Endothelial cell of umbilical vein (primary cell): ENCODE measurements at regions of chr12 and their contacts with region 1.

Region 1: DNA sequence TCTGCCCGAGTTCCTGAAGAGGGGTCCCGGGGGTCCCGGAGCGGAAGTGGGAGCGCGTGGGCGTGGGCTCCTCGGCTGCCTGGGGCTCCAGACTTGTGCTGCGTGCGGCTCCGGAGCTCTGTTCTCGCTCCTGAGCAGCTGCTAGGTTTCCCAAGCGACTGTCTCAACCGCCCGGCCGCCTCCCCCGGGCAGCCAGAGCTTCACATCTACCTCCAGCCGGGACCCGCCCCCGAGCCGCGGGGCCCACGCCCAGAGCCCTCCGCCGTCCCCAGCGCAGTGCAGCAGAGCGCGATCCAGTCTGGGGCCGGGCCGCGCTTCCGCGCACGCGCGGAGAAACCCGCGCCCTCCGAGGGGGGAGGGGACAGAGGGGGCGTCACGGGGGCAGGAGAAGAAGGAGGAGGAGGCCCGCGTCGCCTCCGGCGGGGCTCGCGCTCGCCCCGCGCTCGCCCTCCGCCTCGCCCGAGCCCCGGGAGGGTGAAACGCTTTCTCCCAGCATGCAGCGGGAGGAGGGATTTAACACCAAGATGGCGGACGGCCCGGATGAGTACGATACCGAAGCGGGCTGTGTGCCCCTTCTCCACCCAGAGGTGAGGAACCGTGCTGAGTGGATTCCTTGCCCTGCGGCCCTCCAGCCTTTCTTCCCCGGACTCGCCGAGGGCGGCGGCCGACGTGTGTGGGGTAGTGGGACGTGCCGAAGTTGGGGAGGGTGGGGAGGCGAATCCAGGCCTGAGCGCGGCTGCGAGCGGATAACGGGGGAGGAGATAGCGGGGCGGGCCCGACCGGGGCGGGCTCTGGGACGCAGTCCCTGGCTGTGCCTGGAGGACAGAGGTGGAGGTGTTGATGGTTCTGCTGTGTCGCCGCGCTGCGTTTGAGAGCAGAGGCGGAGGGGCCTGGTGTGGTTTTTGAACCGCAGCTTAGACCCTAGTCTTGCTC is at the start of gene ZDHHC17:
- DNase-seq: peak; percentile 95
- H3K4me3 ChIP-seq: peak within 1 kb of the TSS; percentile 75 to 88 (median 75)
- H3K27ac ChIP-seq: peak within 1 kb of the TSS; percentile 91
- H3K4me1 ChIP-seq: peaks cover 17% of the 10 kb centered on the region
- H3K27me3 ChIP-seq: no peaks in the 10 kb centered on the region
- CTCF ChIP-seq: no peak
- POLR2A ChIP-seq: peak; percentile 82
- total RNA-seq, gene ZDHHC17: 23.6 and 26.9 TPM in 2 replicates

Region 2: GRCh38 chr12:76688631-76689030 is 75.4 kb before region 1 on chr12:
- CTCF ChIA-PET with region 1: no interaction called
- POLR2A ChIA-PET with region 1: interaction called, 4 read pairs
- dilution Hi-C with region 1: no loop called
- intact Hi-C with region 1: loop called (anchors 2 kb)
- DNase-seq: no peak
- H3K4me3 ChIP-seq: no peak overlapping the region
- H3K27ac ChIP-seq: no peak overlapping the region
- H3K4me1 ChIP-seq: peaks cover 9% of the 10 kb centered on the region
- H3K27me3 ChIP-seq: no peaks in the 10 kb centered on the region
- CTCF ChIP-seq: peak; percentile 8 to 13
- POLR2A ChIP-seq: no peak

Region 3: GRCh38 chr12:76866726-76867125 is 102.7 kb after region 1 on chr12:
- CTCF ChIA-PET with region 1: no interaction called
- POLR2A ChIA-PET with region 1: no interaction called
- dilution Hi-C with region 1: no loop called
- intact Hi-C with region 1: no loop called
- DNase-seq: no peak
- H3K4me3 ChIP-seq: no peak overlapping the region
- H3K27ac ChIP-seq: no peak overlapping the region
- H3K4me1 ChIP-seq: no peaks in the 10 kb centered on the region
- H3K27me3 ChIP-seq: no peaks in the 10 kb centered on the region
- CTCF ChIP-seq: no peak
- POLR2A ChIP-seq: no peak

Region 4: DNA sequence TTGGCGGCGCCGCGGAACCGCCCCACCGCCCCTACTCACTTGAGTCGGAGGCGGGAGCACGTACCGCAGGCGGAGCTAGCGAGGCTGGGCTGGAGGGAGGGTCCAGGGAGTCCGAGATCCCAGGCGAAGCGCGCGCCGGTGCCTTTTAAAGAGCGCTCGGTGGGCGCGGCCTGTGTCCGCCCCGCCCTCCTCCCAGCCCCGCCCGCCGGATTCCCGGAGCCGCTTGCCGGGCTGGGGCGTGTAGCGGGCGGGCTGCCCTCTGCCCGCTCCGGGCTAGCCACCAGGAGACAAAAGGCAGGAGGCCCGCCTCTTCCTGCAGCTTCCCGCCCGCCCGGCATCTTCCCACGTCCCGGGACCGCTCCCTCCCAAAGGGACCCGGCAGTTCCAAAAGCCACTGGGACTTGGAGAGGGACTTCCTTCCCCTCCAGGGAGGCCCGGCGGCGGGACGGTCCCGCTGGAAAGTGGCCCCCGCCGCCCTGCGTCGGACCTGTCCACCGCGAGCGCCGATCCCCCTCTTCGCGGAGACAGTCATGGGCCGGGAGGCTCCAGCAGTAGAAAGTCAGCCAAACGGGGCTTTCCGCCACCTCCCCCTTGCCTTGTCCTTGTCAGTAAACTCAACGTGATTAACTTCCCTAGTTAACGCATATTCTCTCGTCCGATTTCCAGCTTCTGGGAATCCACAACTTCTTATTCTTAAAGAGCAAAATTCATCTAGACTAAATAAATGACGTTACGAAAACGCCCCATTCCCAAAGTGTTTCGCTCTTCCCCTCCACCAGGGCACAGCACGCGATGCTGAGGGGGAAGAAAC is 115.1 kb after region 1 on chr12 and contains the start of gene CSRP2:
- CTCF ChIA-PET with region 1: no interaction called
- POLR2A ChIA-PET with region 1: no interaction called
- dilution Hi-C with region 1: no loop called
- intact Hi-C with region 1: loop called (anchors 1 kb)
- DNase-seq: peak; percentile 86
- H3K4me3 ChIP-seq: peak within 1 kb of the TSS; percentile 83 to 92 (median 89)
- H3K27ac ChIP-seq: peak within 1 kb of the TSS; percentile 81
- H3K4me1 ChIP-seq: peaks cover 9% of the 10 kb centered on the region
- H3K27me3 ChIP-seq: no peaks in the 10 kb centered on the region
- CTCF ChIP-seq: peak in 1 of 2 donors; percentile 16
- POLR2A ChIP-seq: peak; percentile 66
- total RNA-seq, gene CSRP2: 12.7 and 13.4 TPM in 2 replicates